Posterior vena cava (tissue), 2 donors: ENCODE measurements at regions of chr5 and their contacts with region 1.

Region 1: GRCh38 chr5:160342403-160342941 is 28.0 kb downstream of the C1QTNF2 start:
- DNase-seq: no peak

Region 2: DNA sequence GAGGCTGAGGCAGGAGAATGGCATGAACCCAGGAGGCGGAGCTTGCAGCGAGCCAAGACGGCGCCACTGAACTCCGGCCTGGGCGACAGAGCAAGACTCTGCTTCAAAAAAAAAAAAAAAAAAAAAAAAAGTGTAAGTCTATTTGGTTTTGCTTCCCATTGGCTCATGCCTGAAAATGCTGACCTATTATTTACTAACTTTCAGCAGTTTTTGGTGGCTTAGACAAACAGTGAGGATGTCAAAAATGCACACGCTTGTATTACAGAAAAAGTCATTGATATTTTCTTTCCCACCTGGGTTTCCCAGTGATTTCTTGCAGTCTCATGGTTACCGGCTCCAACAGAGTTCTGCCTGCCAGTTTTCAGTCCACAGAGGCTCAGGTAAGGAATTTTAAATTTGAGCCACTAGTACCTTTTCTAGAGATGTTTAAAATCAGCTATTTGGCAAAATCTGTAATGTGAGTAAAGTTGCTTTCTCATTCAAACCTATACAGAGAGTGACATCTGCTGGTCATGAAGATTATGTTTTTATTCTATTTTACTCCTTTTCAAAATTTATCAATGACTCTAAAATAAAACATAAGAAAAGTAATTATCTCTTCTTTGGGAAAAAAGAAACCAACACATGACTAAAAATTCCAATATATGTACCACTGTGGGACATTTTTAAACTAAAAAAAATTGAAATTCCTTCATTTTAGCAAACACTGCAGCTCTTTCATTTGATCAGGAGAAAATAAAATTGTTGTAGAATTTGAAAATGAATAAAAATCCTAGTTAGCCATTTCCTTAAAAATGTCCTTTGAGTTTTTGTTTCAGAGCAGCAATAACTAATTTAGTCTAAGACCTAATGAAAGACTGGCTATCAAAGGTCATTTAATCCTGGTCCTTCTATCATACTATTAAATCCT is 48.6 kb after region 1 on chr5:
- intact Hi-C with region 1: loop called in 1 of 2 experiments (anchors 5 kb)
- DNase-seq: no peak

Region 3: GRCh38 chr5:160805376-160805775 is 462.9 kb after region 1 on chr5:
- intact Hi-C with region 1: no loop called
- DNase-seq: no peak